Sciatic nerve (tissue), 2 donors: ENCODE measurements at regions of chr1 and their contacts with region 1.

Region 1: DNA sequence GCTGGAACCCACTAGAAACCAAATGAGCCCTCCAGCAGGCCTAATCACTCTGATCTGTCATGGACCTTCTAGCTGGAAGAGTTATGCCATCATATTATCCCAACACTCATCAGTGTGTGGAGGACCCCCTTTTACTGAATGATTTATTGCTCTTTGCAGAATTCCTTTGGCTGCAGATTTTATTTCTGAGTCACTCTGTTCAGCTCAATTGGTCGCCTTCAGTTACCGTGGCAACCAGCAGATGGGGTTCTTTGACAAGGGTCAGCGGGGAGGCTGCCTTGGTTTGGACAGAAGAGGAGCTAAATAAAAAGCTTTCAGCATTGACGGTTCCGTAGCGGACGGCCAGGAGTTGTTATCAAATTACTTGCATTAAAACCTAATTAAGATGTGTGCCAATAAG is 220.1 kb downstream of the SDCCAG8 start:
- DNase-seq: no peak
- ATAC-seq: no peak

Region 2: DNA sequence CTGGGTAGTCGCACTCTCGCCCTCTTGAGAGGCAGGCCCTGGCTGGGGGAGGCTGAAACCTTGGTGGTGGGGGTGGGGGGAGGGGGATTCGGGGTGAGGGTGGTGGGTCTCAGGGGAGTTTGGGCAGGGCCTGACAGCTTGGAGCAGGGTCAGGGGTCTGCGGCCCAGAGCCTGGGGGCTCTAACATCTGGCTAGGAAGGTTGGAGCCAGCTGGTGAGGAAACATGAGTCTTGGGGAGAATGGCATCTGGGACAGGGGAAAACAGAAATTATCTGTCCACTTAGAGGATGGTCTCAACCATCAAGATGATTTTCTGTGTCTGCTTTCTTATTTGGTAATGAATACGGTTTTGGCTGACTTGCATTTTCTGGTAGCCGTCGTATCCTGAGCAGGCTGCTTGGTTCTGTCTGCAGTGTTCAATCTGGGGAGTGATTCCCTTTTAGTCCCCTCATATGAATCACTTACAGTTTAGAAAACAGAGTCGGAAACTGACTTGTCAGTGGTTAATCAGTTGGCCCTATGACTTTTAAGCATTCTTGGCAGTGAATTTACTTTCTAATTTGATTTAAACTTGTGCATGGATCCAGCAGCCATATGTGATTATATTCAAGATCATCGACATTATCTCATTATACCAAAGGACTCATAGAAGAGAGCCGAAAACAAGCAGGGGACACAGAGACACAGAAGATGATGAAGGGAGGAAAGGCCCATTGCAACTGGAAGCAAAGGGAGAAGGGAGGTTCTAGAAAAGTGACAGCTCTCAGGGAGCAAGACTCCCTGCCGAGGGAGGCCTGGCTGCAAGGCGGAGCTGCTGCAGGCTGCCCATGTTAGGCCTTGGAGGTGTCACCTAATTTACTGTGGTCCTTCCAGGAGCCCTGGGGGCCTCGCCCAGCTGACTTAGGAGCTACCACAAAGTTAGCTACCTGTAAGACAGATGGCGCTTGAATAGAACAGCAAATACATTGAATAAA is 17.5 kb after region 1 on chr1:
- intact Hi-C with region 1: loop called (anchors 1 kb)
- DNase-seq: no peak
- ATAC-seq: no peak

Region 3: DNA sequence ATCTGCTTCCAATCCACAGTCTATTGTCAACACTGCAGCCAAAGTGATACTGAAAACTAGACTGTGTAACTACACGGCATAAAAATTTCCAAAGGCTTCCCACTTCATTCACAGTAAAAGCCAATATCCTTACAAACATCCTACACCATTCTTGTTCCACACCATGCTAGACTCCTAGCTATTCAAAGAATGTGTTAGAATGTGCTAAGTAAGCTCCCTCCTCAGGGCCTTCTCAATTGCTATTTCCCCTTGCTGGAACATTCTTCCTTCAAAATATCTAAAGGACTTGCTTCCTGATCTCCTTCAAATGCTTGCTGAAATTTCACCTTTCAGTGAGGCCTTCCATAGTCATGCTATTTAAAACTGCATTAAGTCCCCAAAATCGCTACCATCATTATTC is 146.0 kb after region 1 on chr1:
- intact Hi-C with region 1: no loop called
- DNase-seq: no peak
- ATAC-seq: no peak